ENCODE measurements at regions of chr20 and their contacts with region 1.

Region 1: GRCh38 chr20:50919567-50919966 is 11.7 kb downstream of the ADNP start:
- DNase-seq: no peak
- H3K4me3 ChIP-seq: no peak overlapping the region
- H3K27ac ChIP-seq: no peak overlapping the region
- H3K4me1 ChIP-seq: peaks cover 0 to 16% (median 3%) of the 10 kb centered on the region in 4 experiments; a peak in 5 of 7 replicates
- H3K27me3 ChIP-seq: no peaks in the 10 kb centered on the region
- CTCF ChIP-seq: no peak
- EP300 ChIP-seq: no peak
- POLR2A ChIP-seq: no peak
- RAD21 ChIP-seq: no peak

Region 2: GRCh38 chr20:50724851-50725721 is 194.5 kb before region 1 on chr20:
- CTCF ChIA-PET with region 1: no interaction called
- POLR2A ChIA-PET with region 1: no interaction called
- DNase-seq: no peak
- H3K4me3 ChIP-seq: no peak overlapping the region
- H3K27ac ChIP-seq: 0 out of 2 replicates have a peak overlapping the region, but pooled peaks have one; percentile 16
- H3K4me1 ChIP-seq: peaks cover 2 to 11% (median 9%) of the 10 kb centered on the region in 4 experiments; a peak in 5 of 7 replicates
- H3K27me3 ChIP-seq: no peaks in the 10 kb centered on the region
- CTCF ChIP-seq: no peak
- EP300 ChIP-seq: no peak
- POLR2A ChIP-seq: no peak
- RAD21 ChIP-seq: no peak

Region 3: DNA sequence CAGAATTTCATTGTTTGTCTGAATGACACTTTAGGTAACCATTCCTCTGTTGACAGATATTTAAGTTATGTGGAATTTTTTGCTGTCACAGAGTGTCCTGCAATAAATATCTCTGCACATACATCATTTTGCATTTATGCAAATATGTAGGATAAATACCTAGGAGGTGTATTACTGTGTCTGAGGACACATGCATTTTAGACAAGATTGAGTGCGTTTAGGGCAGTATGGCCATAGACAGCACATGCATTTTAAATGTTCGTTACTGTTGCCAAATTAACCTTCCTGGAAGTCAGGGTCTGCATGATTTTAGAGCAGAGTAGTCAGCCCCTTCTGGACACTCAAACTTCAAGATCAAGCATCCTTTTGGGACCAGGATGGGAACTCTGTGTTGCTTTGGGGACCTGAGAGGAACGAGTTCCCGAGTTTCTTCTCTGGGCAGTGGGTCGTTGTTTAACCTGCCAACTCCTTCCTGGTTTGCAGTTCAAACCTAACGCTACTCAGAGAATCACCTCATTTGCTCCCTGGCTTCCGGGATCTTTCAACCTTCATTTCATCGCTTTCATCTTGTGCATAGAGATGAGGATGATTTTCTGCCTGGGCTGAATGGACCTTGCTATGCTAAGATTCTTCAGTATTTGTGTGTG is 115.0 kb before region 1 on chr20:
- CTCF ChIA-PET with region 1: interaction called, 3 read pairs
- POLR2A ChIA-PET with region 1: interaction called, 12 read pairs
- DNase-seq: no peak
- H3K4me3 ChIP-seq: no peak overlapping the region
- H3K27ac ChIP-seq: no peak overlapping the region
- H3K4me1 ChIP-seq: peaks cover 0 to 11% (median 3%) of the 10 kb centered on the region in 4 experiments; a peak in 5 of 7 replicates
- H3K27me3 ChIP-seq: no peaks in the 10 kb centered on the region
- CTCF ChIP-seq: no peak
- EP300 ChIP-seq: no peak
- POLR2A ChIP-seq: no peak
- RAD21 ChIP-seq: no peak

Measured in H1 (cell line).